A673 (cell line): ENCODE measurements at regions of chr7 and their contacts with region 1.

Region 1: GRCh38 chr7:82194016-82194643 is 249.4 kb downstream of the CACNA2D1 start:
- DNase-seq: no peak
- H3K4me3 ChIP-seq: no peak overlapping the region
- H3K27ac ChIP-seq: no peak overlapping the region
- H3K4me1 ChIP-seq: peaks cover 4% of the 10 kb centered on the region
- H3K27me3 ChIP-seq: no peaks in the 10 kb centered on the region
- CTCF ChIP-seq: no peak

Region 2: GRCh38 chr7:81618396-81619014 is 575.6 kb before region 1 on chr7:
- CTCF ChIA-PET with region 1: no interaction called
- POLR2A ChIA-PET with region 1: no interaction called
- intact Hi-C with region 1: no loop called
- DNase-seq: peak; percentile 41
- H3K4me3 ChIP-seq: no peak overlapping the region
- H3K27ac ChIP-seq: no peak overlapping the region
- H3K4me1 ChIP-seq: no peaks in the 10 kb centered on the region
- H3K27me3 ChIP-seq: no peaks in the 10 kb centered on the region
- CTCF ChIP-seq: no peak

Region 3: GRCh38 chr7:81659697-81660395 is 534.3 kb before region 1 on chr7:
- CTCF ChIA-PET with region 1: no interaction called
- POLR2A ChIA-PET with region 1: no interaction called
- intact Hi-C with region 1: no loop called
- DNase-seq: no peak
- H3K4me3 ChIP-seq: no peak overlapping the region
- H3K27ac ChIP-seq: no peak overlapping the region
- H3K4me1 ChIP-seq: peaks cover 15% of the 10 kb centered on the region
- H3K27me3 ChIP-seq: no peaks in the 10 kb centered on the region
- CTCF ChIP-seq: no peak

Region 4: DNA sequence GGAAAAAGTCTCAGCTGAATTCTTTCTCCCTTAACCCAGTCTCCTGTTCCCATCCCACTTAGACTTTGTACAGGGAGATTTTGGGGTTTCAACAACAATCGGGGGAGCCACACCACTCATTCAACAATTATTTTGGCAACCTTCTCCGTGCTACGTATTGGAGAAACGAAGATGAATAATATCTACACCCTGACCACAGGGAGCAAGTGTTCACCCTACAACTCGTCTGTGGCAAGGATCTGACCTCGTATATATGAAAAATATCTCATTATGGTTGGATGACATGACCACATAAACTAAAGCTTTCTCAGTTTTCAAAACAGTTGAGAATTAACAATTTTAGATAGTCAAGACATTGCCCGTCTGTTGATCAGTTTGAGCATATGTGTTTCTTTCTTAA is 52.7 kb before region 1 on chr7:
- CTCF ChIA-PET with region 1: no interaction called
- POLR2A ChIA-PET with region 1: no interaction called
- intact Hi-C with region 1: no loop called
- DNase-seq: no peak
- H3K4me3 ChIP-seq: no peak overlapping the region
- H3K27ac ChIP-seq: no peak overlapping the region
- H3K4me1 ChIP-seq: peaks cover 19% of the 10 kb centered on the region
- H3K27me3 ChIP-seq: no peaks in the 10 kb centered on the region
- CTCF ChIP-seq: no peak

Region 5: GRCh38 chr7:82615527-82615926 is 421.4 kb after region 1 on chr7:
- CTCF ChIA-PET with region 1: interaction called, 11 read pairs
- POLR2A ChIA-PET with region 1: no interaction called
- intact Hi-C with region 1: no loop called
- DNase-seq: no peak
- H3K4me3 ChIP-seq: no peak overlapping the region
- H3K27ac ChIP-seq: no peak overlapping the region
- H3K4me1 ChIP-seq: peaks cover 4% of the 10 kb centered on the region
- H3K27me3 ChIP-seq: no peaks in the 10 kb centered on the region
- CTCF ChIP-seq: no peak